T-cell (primary cell): ENCODE measurements at regions of chr2 and their contacts with region 1.

Region 1: GRCh38 chr2:44981136-44982108 is 27.8 kb downstream of the SIX2 start:
- DNase-seq: peak in 34 of 35 experiments; percentile 18 to 81 (median 46)
- ATAC-seq: peak in 2 of 4 experiments; percentile 29 to 53
- H3K4me3 ChIP-seq: no peak overlapping the region
- H3K4me3 Mint-ChIP-seq: no peak overlapping the region
- H3K27ac ChIP-seq: no peak overlapping the region
- H3K27ac Mint-ChIP-seq: no peak overlapping the region
- H3K4me1 ChIP-seq: no peaks in the 10 kb centered on the region
- H3K4me1 Mint-ChIP-seq: peaks cover 2 to 6% (median 4%) of the 10 kb centered on the region in 3 donors
- H3K27me3 ChIP-seq: peaks cover 0 to 24% of the 10 kb centered on the region in 2 experiments
- H3K27me3 Mint-ChIP-seq: peaks cover 33 to 35% of the 10 kb centered on the region in 2 donors

Region 2: DNA sequence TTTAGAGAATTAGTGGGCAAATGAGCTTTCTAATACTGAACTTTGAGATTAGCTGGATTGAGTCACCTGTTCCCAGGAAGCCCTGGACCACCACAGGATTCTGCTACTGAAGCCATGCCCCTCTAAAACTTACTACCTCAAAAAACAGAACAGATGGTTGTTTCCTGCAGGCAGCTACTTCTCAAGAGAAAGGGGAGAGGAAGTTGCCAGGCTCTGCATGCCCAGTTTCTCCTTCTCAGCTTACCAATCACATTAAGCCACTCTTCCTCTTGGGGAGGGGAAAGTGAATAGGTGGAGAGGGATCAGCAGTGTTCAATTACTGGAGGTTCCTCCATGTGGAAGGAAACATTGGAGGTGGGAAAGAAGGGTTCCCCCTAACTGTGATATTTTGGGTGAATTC is 1280.3 kb before region 1 on chr2:
- CTCF ChIA-PET with region 1: no interaction called
- POLR2A ChIA-PET with region 1: interaction called in 1 of 2 experiments, 18 read pairs
- DNase-seq: no peak
- ATAC-seq: no peak
- H3K4me3 ChIP-seq: no peak overlapping the region
- H3K4me3 Mint-ChIP-seq: no peak overlapping the region
- H3K27ac ChIP-seq: no peak overlapping the region
- H3K27ac Mint-ChIP-seq: no peak overlapping the region
- H3K4me1 ChIP-seq: no peaks in the 10 kb centered on the region
- H3K4me1 Mint-ChIP-seq: no peaks in the 10 kb centered on the region
- H3K27me3 ChIP-seq: no peaks in the 10 kb centered on the region
- H3K27me3 Mint-ChIP-seq: peaks cover 4 to 6% of the 10 kb centered on the region in 2 donors

Region 3: GRCh38 chr2:44997963-44998362 is 16.5 kb after region 1 on chr2:
- CTCF ChIA-PET with region 1: no interaction called
- POLR2A ChIA-PET with region 1: no interaction called
- DNase-seq: no peak
- ATAC-seq: no peak
- H3K4me3 ChIP-seq: no peak overlapping the region
- H3K4me3 Mint-ChIP-seq: no peak overlapping the region
- H3K27ac ChIP-seq: no peak overlapping the region
- H3K27ac Mint-ChIP-seq: no peak overlapping the region
- H3K4me1 ChIP-seq: peaks cover 0 to 15% of the 10 kb centered on the region in 2 experiments
- H3K4me1 Mint-ChIP-seq: peaks cover 9 to 17% (median 16%) of the 10 kb centered on the region in 3 donors
- H3K27me3 ChIP-seq: peaks cover 20 to 42% of the 10 kb centered on the region in 2 experiments
- H3K27me3 Mint-ChIP-seq: peaks cover 68 to 80% of the 10 kb centered on the region in 2 donors

Region 4: GRCh38 chr2:45494269-45494977 is 513.0 kb after region 1 on chr2:
- CTCF ChIA-PET with region 1: interaction called, 9 to 20 read pairs
- POLR2A ChIA-PET with region 1: no interaction called
- DNase-seq: peak in 4 of 35 experiments; percentile 3 to 63 (median 14)
- ATAC-seq: no peak
- H3K4me3 ChIP-seq: no peak overlapping the region
- H3K4me3 Mint-ChIP-seq: no peak overlapping the region
- H3K27ac ChIP-seq: no peak overlapping the region
- H3K27ac Mint-ChIP-seq: no peak overlapping the region
- H3K4me1 ChIP-seq: no peaks in the 10 kb centered on the region
- H3K4me1 Mint-ChIP-seq: peaks cover 0 to 15% (median 8%) of the 10 kb centered on the region in 3 donors
- H3K27me3 ChIP-seq: no peaks in the 10 kb centered on the region
- H3K27me3 Mint-ChIP-seq: no peaks in the 10 kb centered on the region

Region 5: GRCh38 chr2:46073540-46074018 is 1092.2 kb after region 1 on chr2:
- CTCF ChIA-PET with region 1: no interaction called
- POLR2A ChIA-PET with region 1: no interaction called
- DNase-seq: no peak
- ATAC-seq: no peak
- H3K4me3 ChIP-seq: no peak overlapping the region
- H3K4me3 Mint-ChIP-seq: no peak overlapping the region
- H3K27ac ChIP-seq: no peak overlapping the region
- H3K27ac Mint-ChIP-seq: no peak overlapping the region
- H3K4me1 ChIP-seq: no peaks in the 10 kb centered on the region
- H3K4me1 Mint-ChIP-seq: peaks cover 0 to 4% (median 0%) of the 10 kb centered on the region in 3 donors
- H3K27me3 ChIP-seq: no peaks in the 10 kb centered on the region
- H3K27me3 Mint-ChIP-seq: no peaks in the 10 kb centered on the region